HEK293T (cell line): ENCODE measurements at regions of chr17 and their contacts with region 1.

Region 1: DNA sequence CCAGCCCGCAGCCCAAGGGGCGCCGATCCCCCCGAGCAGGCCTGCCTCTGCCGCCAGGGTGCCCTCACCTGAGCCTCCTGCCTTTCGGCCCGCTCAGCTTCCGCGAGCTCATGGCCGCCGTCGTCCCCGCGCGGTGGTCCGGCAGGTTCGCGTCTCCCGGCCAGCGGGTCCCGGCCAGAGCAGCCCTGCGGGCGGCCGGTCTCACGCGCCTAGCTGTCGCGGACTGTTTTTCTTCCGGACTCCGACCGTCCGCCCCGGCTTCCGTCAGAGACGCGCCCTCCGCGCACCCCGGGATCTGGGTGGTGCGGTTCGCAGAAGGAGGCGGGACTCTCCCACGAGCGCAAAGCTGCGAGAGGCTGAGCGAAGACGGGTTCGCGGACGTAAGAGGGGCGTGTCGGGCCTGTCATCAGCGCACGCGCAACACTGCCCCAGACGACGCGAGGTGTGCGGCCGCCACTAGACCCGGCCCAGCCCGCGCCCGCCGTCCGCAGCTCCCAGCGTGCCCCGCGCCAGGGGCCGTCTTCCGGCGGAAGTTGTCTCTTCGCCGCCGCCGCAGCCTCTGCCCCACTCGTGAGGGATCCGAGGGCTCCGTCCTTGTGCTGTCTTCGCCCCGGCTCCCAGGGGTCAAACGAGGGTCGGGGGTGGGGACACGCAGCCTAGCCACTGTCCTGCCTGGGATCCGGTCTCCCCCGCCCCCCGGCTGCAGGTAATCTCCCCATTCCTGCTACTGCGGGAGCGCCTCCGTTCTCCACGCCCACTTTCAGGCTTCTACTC is at the start of gene INPP5K:
- DNase-seq: peak; percentile 99

Region 2: DNA sequence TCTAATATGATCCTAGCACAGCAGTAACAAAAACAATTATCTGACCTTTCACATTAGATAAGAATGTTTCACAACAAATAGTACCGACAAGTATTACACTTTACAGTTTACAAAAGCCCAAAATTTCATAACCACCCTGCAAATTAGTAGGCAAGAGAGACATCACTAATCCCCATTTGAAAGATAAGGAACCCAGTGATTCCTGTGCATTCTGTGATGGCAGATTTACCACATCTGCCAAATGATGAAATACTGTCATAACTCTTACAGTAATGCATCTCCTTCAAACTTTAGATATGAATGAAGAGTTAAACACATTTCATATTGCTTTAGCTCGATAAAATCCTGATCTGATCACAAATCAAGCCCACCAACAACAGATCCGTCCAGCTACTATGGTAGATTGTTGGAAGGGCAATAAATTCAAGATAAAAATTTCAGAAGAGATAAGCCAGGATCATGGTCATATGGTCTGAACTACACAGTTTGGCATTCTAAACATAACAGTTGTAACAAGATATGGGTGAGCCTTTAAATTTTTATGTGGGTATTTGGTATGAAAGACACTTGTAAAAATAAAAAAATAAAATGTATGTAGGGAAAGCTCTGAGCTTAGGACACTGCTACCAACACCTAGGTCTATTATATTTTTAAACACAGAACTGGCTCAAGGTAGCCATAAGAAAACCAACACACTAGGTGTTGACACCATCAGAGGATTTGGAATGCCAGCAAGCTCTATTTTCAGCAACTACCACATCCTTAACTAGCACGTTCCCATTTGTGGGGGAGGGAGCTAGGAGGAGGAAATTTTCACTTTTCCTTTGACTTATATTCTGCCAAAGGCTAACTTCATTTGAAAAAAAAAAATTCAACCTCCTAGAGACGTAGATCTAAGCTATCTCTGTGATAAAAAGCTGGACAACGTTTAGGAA is 125.9 kb before region 1 on chr17:
- CTCF ChIA-PET with region 1: no interaction called
- POLR2A ChIA-PET with region 1: no interaction called
- DNase-seq: no peak

Region 3: GRCh38 chr17:1488030-1488863 is 28.3 kb before region 1 on chr17:
- CTCF ChIA-PET with region 1: no interaction called
- POLR2A ChIA-PET with region 1: interaction called, 18 read pairs
- DNase-seq: peak; percentile 84

Region 4: DNA sequence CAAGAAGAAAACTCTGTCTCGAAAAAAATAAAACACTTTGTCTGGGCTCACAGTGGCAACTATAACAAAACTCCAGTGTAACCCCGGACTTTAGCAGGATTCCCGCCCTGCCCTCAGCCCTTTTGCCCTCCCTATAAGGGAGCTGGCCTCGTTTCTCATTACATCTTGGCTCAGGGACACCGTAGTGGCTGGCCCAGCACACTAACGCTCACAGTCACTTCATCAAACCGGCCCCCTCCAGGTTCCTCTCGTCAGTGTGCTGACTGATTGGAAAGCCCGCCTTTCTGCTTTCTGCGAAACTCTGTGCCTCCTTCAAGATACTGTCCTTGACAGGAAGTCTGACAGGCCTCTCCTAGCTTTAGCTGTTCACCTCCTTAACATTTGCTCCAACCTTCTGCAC is 12.9 kb before region 1 on chr17:
- CTCF ChIA-PET with region 1: interaction called, 3 read pairs
- POLR2A ChIA-PET with region 1: interaction called, 16 read pairs
- DNase-seq: no peak

Region 5: DNA sequence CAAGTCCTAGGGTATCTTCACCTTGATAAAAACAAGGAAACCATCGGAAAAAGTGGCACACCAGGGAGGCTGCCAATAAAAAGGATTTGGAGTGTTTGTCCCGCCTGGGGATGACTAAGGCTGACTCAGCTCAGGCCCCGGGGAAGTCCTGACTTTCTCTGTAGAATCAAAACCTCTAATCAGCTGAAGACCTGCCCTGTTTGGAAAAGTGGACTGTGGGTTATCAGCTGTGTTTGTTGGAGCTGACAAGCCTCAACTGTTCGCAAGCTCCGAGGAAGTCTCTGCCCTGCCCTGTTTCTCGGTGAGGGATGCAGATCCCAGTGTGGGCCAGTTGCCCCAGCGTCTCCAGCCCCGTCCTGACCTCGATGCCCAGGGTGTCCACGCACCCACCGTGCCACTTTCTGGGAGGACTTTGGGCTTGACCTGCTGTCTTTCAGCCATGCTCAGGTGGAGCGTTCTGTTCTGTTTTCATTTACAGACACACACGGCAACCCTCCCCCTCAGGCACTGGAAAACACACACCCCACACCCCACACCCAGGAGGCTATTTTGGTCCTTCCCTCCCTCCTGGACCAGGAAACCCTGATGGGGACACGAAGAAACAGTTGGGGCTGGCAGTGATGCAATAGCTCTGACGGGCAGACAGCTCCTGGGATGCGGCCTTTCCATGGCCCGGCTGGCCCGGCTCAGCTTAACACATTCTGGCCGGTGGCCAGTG is 73.6 kb after region 1 on chr17:
- CTCF ChIA-PET with region 1: no interaction called
- POLR2A ChIA-PET with region 1: no interaction called
- DNase-seq: peak; percentile 52